ENCODE measurements at regions of chr15 and their contacts with region 1.

Region 1: DNA sequence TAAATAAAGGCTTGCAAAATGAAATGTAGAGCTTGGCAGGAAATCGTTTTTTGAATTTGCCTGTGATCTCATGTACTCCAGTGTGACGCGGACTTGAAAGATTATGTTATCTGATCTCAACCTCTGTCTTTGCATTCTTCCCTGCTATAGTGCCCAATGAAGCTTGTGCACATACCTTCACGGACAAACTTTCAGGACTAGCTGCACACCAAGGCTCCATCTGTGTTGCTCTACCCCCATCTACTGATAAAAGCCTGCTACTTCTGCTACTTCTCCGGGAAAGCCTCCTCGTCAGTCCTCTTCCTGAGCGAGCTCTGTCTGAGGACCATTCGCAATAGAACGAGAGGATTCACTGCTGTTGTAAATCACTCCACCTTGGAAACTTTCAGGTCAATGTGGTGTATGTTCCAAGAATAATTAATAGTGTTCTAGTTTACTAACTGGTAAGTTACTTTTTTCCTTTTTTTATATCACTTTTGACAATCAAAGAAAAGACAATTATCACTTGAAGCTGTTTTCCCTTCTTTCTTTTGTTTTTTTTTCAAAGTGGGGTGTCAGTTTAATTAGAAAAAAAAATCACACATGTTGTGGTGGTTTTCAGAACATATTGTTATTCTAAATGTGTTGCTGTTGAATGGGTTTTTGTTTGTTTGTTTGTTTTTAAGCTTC is 217.6 kb downstream of the ARRDC4 start:
- H3K4me3 ChIP-seq: no peak overlapping the region
- H3K27ac ChIP-seq: no peak overlapping the region
- H3K4me1 ChIP-seq: no peaks in the 10 kb centered on the region
- CTCF ChIP-seq: peak; percentile 89

Region 2: GRCh38 chr15:97909291-97909891 is 268.7 kb before region 1 on chr15:
- CTCF ChIA-PET with region 1: interaction called, 53 read pairs
- POLR2A ChIA-PET with region 1: interaction called, 4 read pairs
- H3K4me3 ChIP-seq: no peak overlapping the region
- H3K27ac ChIP-seq: no peak overlapping the region
- H3K4me1 ChIP-seq: no peaks in the 10 kb centered on the region
- CTCF ChIP-seq: peak; percentile 39; the same call in 1 of the 2 replicates

Region 3: GRCh38 chr15:98142572-98142971 is 35.5 kb before region 1 on chr15:
- CTCF ChIA-PET with region 1: interaction called, 14 read pairs
- POLR2A ChIA-PET with region 1: no interaction called
- H3K4me3 ChIP-seq: no peak overlapping the region
- H3K27ac ChIP-seq: no peak overlapping the region
- H3K4me1 ChIP-seq: no peaks in the 10 kb centered on the region; the same call in 1 of the 2 replicates
- CTCF ChIP-seq: peak; percentile 53

Region 4: GRCh38 chr15:98272625-98273024 is 94.6 kb after region 1 on chr15:
- CTCF ChIA-PET with region 1: no interaction called
- POLR2A ChIA-PET with region 1: no interaction called
- H3K4me3 ChIP-seq: no peak overlapping the region
- H3K27ac ChIP-seq: no peak overlapping the region
- H3K4me1 ChIP-seq: no peaks in the 10 kb centered on the region
- CTCF ChIP-seq: no peak

Region 5: DNA sequence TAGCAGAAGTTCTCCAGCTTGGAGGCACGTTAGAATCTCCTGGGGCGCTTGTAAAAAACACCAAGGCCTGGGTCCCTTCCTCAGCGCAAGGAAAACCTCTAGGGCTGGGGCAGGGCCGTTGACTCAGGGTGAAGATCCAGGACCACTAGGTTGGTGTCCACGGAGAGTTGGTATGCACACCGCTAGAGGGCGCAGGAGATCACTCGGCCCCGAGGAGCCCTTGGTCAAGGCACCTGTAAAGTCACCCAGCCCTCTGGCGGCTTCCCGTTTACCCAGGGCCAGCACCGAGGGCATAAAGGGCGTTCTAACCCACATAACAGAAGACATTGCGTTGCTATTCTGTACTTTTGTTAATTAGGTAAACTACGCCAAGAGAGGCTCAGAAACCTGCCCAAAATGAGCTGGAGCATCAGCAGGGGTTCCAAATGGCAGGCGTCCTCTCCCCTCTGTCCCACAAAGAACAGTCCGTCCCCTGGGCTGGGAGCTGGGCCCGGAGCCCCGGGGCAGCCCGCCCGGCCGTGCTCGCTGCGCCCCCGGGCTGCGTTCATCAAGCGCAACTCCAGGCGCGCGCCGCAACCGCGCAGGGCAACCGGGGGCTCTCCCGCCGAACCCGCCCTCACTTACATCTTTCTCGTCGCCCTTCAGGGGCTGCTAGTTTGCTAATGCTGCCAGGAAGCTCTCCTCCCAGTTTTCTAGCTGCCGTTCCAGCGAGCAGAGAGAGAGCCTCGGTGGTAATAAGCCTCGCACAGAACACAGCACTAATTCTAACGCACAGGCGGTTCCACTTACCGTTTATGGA is 114.6 kb after region 1 on chr15:
- CTCF ChIA-PET with region 1: interaction called, 14 read pairs
- POLR2A ChIA-PET with region 1: no interaction called
- H3K4me3 ChIP-seq: peak overlapping the region; percentile 19
- H3K27ac ChIP-seq: no peak overlapping the region; the same call in 1 of the 2 replicates
- H3K4me1 ChIP-seq: peaks cover 11% of the 10 kb centered on the region
- CTCF ChIP-seq: peak; percentile 71

Measured in HEK293 (cell line).